Activated CD8-positive, alpha-beta memory T cell treated with anti-CD3 and anti-CD28 coated beads, Interleukin-2, amount 10 ng/mL, durations not matched to agents 7 days and 5 days (primary cell): ENCODE measurements at regions of chr13 and their contacts with region 1.

Region 1: GRCh38 chr13:75694722-75695121 is 58.6 kb downstream of the LMO7 start:
- DNase-seq: no peak
- ATAC-seq: no peak
- H3K4me3 Mint-ChIP-seq: no peak overlapping the region
- H3K27ac Mint-ChIP-seq: no peak overlapping the region
- H3K4me1 Mint-ChIP-seq: no peaks in the 10 kb centered on the region
- H3K27me3 Mint-ChIP-seq: no peaks in the 10 kb centered on the region

Region 2: GRCh38 chr13:75670496-75670895 is 24.2 kb before region 1 on chr13:
- CTCF ChIA-PET with region 1: interaction called, 21 read pairs
- DNase-seq: no peak
- ATAC-seq: no peak
- H3K4me3 Mint-ChIP-seq: no peak overlapping the region
- H3K27ac Mint-ChIP-seq: no peak overlapping the region
- H3K4me1 Mint-ChIP-seq: no peaks in the 10 kb centered on the region
- H3K27me3 Mint-ChIP-seq: no peaks in the 10 kb centered on the region

Region 3: GRCh38 chr13:75705395-75705794 is 10.7 kb after region 1 on chr13:
- CTCF ChIA-PET with region 1: interaction called, 14 read pairs
- DNase-seq: no peak
- ATAC-seq: peak; percentile 49
- H3K4me3 Mint-ChIP-seq: no peak overlapping the region
- H3K27ac Mint-ChIP-seq: no peak overlapping the region
- H3K4me1 Mint-ChIP-seq: peaks cover 16% of the 10 kb centered on the region
- H3K27me3 Mint-ChIP-seq: no peaks in the 10 kb centered on the region

Region 4: GRCh38 chr13:75760131-75761021 is 65.7 kb after region 1 on chr13:
- CTCF ChIA-PET with region 1: interaction called, 14 read pairs
- DNase-seq: no peak
- ATAC-seq: peak; percentile 41
- H3K4me3 Mint-ChIP-seq: peak overlapping the region; percentile 29
- H3K27ac Mint-ChIP-seq: peak overlapping the region; percentile 44
- H3K4me1 Mint-ChIP-seq: peaks cover 41% of the 10 kb centered on the region
- H3K27me3 Mint-ChIP-seq: no peaks in the 10 kb centered on the region

Region 5: DNA sequence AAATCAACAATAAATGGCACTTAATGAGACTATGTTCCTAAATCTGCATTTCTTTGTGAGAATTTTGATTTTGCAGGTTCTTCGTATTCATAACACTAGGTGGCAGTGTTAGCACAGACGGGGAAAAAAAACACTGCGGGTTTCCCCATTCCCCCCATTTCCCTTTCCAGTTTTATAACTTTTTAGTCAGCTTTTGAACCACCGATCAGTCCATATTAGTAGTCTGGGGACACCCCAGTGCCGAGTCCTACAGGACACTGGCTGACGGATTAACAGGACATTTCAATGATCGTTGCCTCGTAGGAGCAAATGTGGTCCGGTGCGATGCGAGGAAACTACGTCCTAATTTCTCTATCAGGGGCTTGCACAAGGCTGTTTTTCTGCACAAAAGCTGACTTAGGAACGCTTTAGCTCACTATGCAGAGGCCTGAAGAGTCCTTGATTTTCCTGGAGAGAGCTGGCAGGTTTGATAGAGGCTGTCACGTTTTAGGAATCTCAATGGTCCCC is 175.7 kb after region 1 on chr13:
- CTCF ChIA-PET with region 1: interaction called, 43 read pairs
- DNase-seq: no peak
- ATAC-seq: peak; percentile 25
- H3K4me3 Mint-ChIP-seq: peak overlapping the region; percentile 62
- H3K27ac Mint-ChIP-seq: peak overlapping the region; percentile 74
- H3K4me1 Mint-ChIP-seq: peaks cover 21% of the 10 kb centered on the region
- H3K27me3 Mint-ChIP-seq: peaks cover 20% of the 10 kb centered on the region

Region 6: DNA sequence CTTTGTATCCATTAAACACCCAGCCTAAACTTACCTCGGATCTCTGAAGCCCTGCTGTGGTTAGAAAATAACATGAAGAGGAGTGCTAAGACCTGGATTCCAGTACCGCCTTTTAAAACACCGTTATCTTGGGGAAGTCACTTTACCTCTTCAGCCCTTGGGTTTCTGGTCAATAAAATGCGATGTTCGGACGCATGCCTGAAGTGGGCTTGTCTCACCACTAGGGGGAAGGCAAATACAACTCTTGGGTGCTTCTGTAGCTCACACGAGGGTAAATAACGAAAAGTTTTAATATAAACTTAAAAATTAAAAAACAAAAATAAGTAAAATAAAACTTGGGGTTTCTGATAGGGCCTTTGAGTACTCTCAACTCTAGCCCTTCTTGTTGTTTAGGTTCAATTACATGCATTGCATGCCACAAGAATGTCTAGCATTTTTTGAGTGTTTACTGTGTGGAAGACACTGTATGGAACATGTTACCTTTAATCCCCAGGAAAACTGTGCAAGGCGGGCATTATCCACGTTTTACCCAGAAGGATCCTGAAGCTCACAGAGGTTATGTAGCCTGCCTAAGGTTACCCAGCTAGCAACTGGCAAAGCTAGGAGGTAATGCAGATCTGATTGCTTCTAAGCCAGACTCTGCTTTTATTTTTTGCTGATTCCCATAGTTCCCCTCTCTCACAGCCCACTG is 181.8 kb after region 1 on chr13:
- CTCF ChIA-PET with region 1: interaction called, 43 read pairs
- DNase-seq: peak; percentile 71
- ATAC-seq: peak; percentile 92
- H3K4me3 Mint-ChIP-seq: peak overlapping the region; percentile 27
- H3K27ac Mint-ChIP-seq: no peak overlapping the region
- H3K4me1 Mint-ChIP-seq: peaks cover 16% of the 10 kb centered on the region
- H3K27me3 Mint-ChIP-seq: peaks cover 29% of the 10 kb centered on the region